CD14-positive monocyte (primary cell): ENCODE measurements at regions of chr7 and their contacts with region 1.

Region 1: DNA sequence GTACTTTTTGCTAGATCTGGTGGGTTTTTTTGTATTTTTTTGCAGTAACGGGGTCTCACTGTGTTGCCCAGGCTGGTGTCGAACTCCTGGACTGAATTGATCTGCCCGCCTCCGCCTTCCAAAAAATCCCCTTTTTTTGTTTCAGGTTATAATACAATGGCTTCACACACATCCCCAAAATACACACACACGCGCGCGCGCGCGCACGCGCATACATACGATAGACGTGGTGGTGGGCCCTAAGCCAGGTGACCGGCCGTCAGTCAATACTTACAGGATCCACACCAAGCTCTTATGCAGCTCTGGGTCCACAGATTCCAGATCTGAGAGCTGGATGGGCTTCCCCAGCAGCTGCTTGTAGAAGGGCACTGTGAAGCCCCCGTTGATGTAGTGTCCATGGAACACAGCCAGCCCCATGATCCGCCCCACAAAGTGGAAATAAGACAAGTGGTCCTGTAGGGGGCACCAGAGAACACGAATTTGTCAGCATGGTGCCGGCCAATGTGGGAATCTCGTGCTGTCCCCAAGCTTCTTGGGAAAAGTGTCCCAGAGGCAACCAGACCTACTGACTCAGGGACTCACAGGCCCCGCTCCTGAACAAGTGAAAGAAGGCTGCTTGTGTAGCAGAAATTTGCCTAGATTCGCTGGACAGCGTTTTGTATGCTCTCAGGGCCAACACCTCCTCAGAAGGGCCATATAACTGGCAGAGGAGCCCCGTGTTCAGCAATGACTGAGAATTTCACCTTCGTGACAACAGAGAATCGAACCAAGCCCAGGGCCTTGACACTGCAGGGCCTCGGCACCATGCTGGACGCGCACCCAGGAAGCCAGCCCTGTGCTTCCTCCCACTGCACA is 103.6 kb downstream of the SMURF1 start:
- DNase-seq: peak; percentile 38 to 66 (median 63)
- H3K4me3 ChIP-seq: no peak overlapping the region
- H3K4me3 Mint-ChIP-seq: no peak overlapping the region
- H3K27ac ChIP-seq: no peak overlapping the region
- H3K27ac Mint-ChIP-seq: peak overlapping the region in 2 of 7 donors; percentile 30 to 32
- H3K4me1 ChIP-seq: no peaks in the 10 kb centered on the region
- H3K4me1 Mint-ChIP-seq: no peaks in the 10 kb centered on the region
- H3K27me3 ChIP-seq: no peaks in the 10 kb centered on the region
- H3K27me3 Mint-ChIP-seq: peaks cover 0 to 5% (median 0%) of the 10 kb centered on the region in 3 donors
- CTCF ChIP-seq: peak; percentile 85

Region 2: GRCh38 chr7:99050971-99051370 is 10.6 kb after region 1 on chr7:
- intact Hi-C with region 1: no loop called
- DNase-seq: no peak
- H3K4me3 ChIP-seq: no peak overlapping the region
- H3K4me3 Mint-ChIP-seq: no peak overlapping the region
- H3K27ac ChIP-seq: no peak overlapping the region
- H3K27ac Mint-ChIP-seq: no peak overlapping the region
- H3K4me1 ChIP-seq: no peaks in the 10 kb centered on the region
- H3K4me1 Mint-ChIP-seq: no peaks in the 10 kb centered on the region
- H3K27me3 ChIP-seq: no peaks in the 10 kb centered on the region
- H3K27me3 Mint-ChIP-seq: no peaks in the 10 kb centered on the region
- CTCF ChIP-seq: no peak

Region 3: GRCh38 chr7:99193527-99194220 is 153.3 kb after region 1 on chr7:
- intact Hi-C with region 1: no loop called
- DNase-seq: no peak
- H3K4me3 ChIP-seq: no peak overlapping the region
- H3K4me3 Mint-ChIP-seq: no peak overlapping the region
- H3K27ac ChIP-seq: no peak overlapping the region
- H3K27ac Mint-ChIP-seq: no peak overlapping the region
- H3K4me1 ChIP-seq: no peaks in the 10 kb centered on the region
- H3K4me1 Mint-ChIP-seq: peaks cover 4% of the 10 kb centered on the region
- H3K27me3 ChIP-seq: no peaks in the 10 kb centered on the region
- H3K27me3 Mint-ChIP-seq: peaks cover 3 to 11% (median 5%) of the 10 kb centered on the region in 3 donors
- CTCF ChIP-seq: no peak

Region 4: DNA sequence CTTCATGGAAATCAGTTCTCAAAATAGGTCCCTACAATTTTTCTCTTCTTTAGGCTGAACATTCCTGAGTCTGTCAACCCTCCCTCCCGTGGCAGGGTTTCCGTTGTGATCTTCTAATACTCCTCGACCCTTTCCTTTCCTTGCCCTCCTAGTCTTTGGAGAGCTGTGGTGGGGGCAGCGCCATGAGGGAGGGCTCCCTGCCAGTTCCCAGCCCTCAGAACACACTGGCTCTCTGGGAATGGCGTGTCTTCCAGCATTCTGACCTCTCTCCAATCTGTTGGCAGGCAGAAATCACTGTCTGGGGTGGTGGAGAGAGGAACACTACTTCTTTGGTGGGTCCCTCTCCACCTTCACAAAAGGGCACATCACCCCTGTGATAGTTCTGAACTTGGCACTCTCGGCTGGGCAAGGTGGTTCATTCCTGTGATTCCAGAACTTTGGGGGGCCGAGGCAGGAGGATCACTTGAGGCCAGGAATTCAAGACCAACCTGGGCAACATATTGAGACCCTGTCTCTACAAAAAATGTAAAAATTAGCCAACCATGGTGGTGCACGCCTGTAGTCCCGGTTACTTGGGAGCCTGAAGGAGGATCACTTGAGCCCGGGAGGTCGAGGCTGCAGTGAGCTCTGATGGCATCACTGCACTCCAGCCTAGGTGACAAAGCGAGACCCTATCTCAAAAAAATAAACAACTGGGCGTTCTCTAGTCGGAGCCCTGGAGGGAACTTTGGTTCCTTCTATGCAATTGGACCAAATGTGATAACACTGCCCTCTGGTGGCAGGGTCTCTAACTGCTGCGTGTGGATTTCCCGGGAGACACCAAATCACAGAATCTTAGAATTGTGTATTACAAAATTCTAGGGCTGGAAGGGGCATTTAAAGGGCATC is 272.2 kb after region 1 on chr7:
- intact Hi-C with region 1: loop called (anchors 1 to 2 kb)
- DNase-seq: peak; percentile 52 to 73 (median 63)
- H3K4me3 ChIP-seq: peak overlapping the region; percentile 21 to 65 (median 24)
- H3K4me3 Mint-ChIP-seq: peak overlapping the region; percentile 48 to 63
- H3K27ac ChIP-seq: no peak overlapping the region
- H3K27ac Mint-ChIP-seq: peak overlapping the region in 2 of 7 donors; percentile 30 to 57
- H3K4me1 ChIP-seq: peaks cover 4 to 6% of the 10 kb centered on the region in 2 donors
- H3K4me1 Mint-ChIP-seq: peaks cover 2% of the 10 kb centered on the region
- H3K27me3 ChIP-seq: no peaks in the 10 kb centered on the region
- H3K27me3 Mint-ChIP-seq: peaks cover 3 to 6% (median 4%) of the 10 kb centered on the region in 3 donors
- CTCF ChIP-seq: peak; percentile 88